ENCODE measurements at regions of chr14 and their contacts with region 1.

Region 1: DNA sequence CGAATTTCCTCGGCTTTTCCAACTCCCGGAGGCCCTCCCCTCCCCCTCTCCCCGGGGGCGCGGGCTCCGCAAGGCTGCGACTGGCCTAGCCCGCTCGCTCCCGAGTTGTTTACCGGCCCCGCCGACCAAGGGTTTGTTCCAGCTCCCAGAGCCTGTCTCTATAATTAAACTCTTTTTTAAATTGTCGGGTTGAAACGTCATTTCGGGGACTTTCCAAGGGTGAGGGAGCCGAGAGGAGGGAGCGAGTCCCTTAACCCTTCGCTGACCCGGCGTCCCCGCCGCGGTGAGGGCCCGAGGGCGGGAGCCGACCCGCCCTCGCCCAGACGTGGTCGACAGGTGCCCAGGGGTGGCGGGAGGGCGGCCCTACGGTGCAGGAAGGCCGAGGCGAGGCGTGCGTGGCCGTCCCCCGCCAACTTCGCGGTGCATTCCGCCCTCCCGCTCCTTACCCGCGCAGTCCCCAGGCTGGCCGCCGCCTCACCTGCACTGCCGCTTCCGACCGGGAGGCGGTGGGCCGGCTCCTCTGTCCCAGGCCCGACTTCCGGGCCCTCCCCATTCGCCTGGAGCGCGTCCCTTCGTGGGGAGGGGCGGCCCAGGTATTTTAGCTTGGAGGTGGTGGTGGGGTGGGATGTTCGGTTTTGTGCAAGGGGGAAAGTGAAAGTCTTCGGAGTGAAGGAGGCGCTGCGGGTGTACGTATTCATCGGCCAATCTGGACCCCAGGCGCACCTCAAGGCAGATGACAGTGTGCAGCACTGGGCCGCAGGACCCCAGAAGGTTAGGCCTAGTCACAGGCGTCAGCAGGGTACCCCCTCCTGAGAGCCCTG is 2.9 kb upstream of the ZFP36L1 start:
- DNase-seq: no peak
- H3K4me3 ChIP-seq: peak overlapping the region; percentile 60
- H3K27me3 ChIP-seq: no peaks in the 10 kb centered on the region
- CTCF ChIP-seq: peak; percentile 79

Region 2: GRCh38 chr14:68248481-68249255 is 547.1 kb before region 1 on chr14:
- CTCF ChIA-PET with region 1: interaction called, 8 read pairs
- POLR2A ChIA-PET with region 1: interaction called, 30 read pairs
- DNase-seq: no peak
- H3K4me3 ChIP-seq: no peak overlapping the region
- H3K27me3 ChIP-seq: no peaks in the 10 kb centered on the region
- CTCF ChIP-seq: peak; percentile 53

Region 3: DNA sequence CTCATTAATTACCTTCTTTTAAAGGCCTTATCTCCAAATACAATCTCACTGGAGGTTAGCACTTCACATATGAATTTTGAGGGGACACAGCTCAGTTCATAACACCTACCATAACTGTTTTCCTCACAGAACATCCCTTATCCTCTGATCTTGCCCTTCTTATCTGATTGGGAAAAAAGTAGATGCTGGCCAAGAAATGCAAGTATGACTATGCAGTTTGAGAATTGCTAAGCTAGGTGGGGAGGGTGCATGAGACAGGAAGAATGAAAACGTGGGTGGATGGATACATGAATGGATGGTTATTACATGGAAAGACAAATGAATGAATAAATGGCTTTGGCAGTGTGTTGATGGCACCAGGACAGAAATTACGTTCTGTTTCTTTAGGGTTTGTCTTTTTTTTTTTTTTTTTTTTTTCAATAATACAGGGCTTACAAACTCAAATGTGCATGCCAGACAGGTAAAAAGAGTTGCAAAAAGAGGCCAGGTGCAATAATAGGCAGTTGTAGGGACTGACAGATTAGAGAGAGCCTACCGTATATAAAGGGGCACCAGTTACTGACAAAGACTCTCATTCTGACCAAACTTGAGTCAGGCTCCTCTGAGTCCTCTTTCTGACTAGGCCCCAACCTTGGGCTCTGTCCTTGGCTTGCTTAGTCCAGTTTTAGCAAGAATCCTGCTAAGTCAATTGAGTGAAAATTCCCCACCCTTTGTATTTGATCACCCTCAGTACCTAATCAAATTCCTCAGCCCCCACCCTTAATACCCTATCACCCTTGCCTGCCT is 307.8 kb before region 1 on chr14:
- CTCF ChIA-PET with region 1: no interaction called
- POLR2A ChIA-PET with region 1: interaction called, 10 read pairs
- DNase-seq: no peak
- H3K4me3 ChIP-seq: no peak overlapping the region
- H3K27me3 ChIP-seq: no peaks in the 10 kb centered on the region
- CTCF ChIP-seq: no peak

Region 4: GRCh38 chr14:68807148-68807600 is 11.4 kb after region 1 on chr14:
- CTCF ChIA-PET with region 1: interaction called, 8 read pairs
- POLR2A ChIA-PET with region 1: interaction called, 18 read pairs
- DNase-seq: no peak
- H3K4me3 ChIP-seq: no peak overlapping the region
- H3K27me3 ChIP-seq: no peaks in the 10 kb centered on the region
- CTCF ChIP-seq: no peak

Region 5: DNA sequence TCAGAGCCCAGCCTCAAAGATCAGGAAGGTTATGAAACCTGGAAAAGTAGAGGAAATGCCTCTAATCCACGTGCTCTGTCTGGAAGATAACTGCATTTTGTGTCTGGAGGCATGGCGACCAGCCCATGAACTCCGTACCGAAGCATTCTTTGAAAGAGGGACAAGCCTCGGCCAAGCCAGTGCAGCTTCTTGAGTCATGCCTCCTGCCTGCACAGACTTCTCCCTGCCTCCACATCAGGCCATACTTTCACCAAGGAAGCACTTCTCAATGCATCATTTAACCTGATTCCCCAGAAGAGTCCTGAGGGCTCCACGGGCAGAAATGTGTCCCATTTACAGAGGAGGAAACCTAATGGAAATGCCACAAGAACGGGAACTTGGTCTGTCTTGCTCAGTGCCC is 179.9 kb after region 1 on chr14:
- CTCF ChIA-PET with region 1: no interaction called
- POLR2A ChIA-PET with region 1: interaction called, 16 read pairs
- DNase-seq: peak; percentile 41
- H3K4me3 ChIP-seq: peak overlapping the region; percentile 96
- H3K27me3 ChIP-seq: no peaks in the 10 kb centered on the region
- CTCF ChIP-seq: 0 out of 2 replicates have a peak, but pooled peaks have one; percentile 8

Measured in BJ (cell line).